Natural killer cell (primary cell): ENCODE measurements at regions of chr7 and their contacts with region 1.

Region 1: GRCh38 chr7:45136106-45137060 is 21.2 kb upstream of the RAMP3 start:
- DNase-seq: peak; percentile 58 to 93
- ATAC-seq: peak; percentile 86 to 98 (median 97)
- H3K4me3 ChIP-seq: no peak overlapping the region
- H3K4me3 Mint-ChIP-seq: no peak overlapping the region
- H3K27ac ChIP-seq: no peak overlapping the region
- H3K27ac Mint-ChIP-seq: peak overlapping the region in 1 of 2 donors; percentile 63
- H3K4me1 ChIP-seq: peaks cover 5% of the 10 kb centered on the region
- H3K4me1 Mint-ChIP-seq: peaks cover 12 to 23% of the 10 kb centered on the region in 2 donors
- H3K27me3 ChIP-seq: no peaks in the 10 kb centered on the region
- H3K27me3 Mint-ChIP-seq: peaks cover 0 to 8% of the 10 kb centered on the region in 2 donors
- CTCF ChIP-seq: peak; percentile 83

Region 2: DNA sequence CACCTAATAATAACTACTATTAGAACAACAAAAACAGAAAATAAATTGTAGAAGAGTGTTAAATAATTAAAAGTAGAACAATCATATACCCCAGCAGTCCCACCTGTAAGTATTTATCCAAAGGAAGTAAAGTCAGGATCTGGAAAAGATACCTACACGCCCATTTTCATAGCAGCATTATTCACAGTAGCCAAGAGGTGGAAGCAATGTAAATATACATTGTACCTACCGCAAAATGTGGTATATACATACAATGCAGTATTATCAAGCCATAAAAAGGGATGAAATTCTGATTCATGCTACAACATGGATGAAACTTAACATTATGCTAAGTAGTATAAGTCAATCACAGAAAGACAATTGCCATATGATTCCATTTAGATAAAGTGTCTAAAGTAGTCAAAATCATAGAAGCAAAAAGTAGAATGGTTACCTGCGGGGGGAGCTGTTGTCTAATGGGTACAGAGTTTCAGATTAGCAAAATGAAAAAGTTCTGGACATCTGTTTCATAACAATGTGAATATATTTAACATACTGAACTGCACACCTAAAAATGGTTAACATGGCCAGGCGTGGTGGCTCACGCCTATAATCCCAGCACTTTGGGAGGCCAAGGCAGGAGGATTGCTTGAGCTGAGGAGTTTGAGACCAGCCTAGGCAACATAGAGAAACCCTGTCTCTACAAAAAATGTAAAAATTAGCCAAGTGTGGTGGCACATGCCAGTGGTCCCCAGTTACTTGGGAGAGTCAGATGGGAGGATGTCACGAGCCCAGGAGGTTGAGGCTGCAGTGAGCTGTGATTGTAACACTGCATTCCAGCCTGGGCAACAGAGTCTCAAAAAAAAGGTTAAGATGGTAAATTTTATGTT is 548.3 kb before region 1 on chr7:
- intact Hi-C with region 1: loop called (anchors 5 kb)
- DNase-seq: peak; percentile 43 to 81
- ATAC-seq: peak; percentile 76 to 92 (median 79)
- H3K4me3 ChIP-seq: no peak overlapping the region
- H3K4me3 Mint-ChIP-seq: no peak overlapping the region
- H3K27ac ChIP-seq: no peak overlapping the region
- H3K27ac Mint-ChIP-seq: peak overlapping the region in 1 of 2 donors; percentile 12
- H3K4me1 ChIP-seq: peaks cover 5% of the 10 kb centered on the region
- H3K4me1 Mint-ChIP-seq: peaks cover 4 to 8% of the 10 kb centered on the region in 2 donors
- H3K27me3 ChIP-seq: no peaks in the 10 kb centered on the region
- H3K27me3 Mint-ChIP-seq: peaks cover 0 to 2% of the 10 kb centered on the region in 2 donors
- CTCF ChIP-seq: peak; percentile 74

Region 3: GRCh38 chr7:44858161-44858560 is 278.2 kb before region 1 on chr7:
- intact Hi-C with region 1: loop called (anchors 1 kb)
- DNase-seq: no peak
- ATAC-seq: no peak
- H3K4me3 ChIP-seq: no peak overlapping the region
- H3K4me3 Mint-ChIP-seq: no peak overlapping the region
- H3K27ac ChIP-seq: no peak overlapping the region
- H3K27ac Mint-ChIP-seq: no peak overlapping the region
- H3K4me1 ChIP-seq: peaks cover 7% of the 10 kb centered on the region
- H3K4me1 Mint-ChIP-seq: peaks cover 0 to 5% of the 10 kb centered on the region in 2 donors
- H3K27me3 ChIP-seq: no peaks in the 10 kb centered on the region
- H3K27me3 Mint-ChIP-seq: peaks cover 2 to 7% of the 10 kb centered on the region in 2 donors
- CTCF ChIP-seq: no peak

Region 4: GRCh38 chr7:44921607-44922359 is 214.6 kb before region 1 on chr7:
- intact Hi-C with region 1: loop called (anchors 5 kb)
- DNase-seq: peak; percentile 94
- ATAC-seq: peak; percentile 94 to 99 (median 99)
- H3K4me3 ChIP-seq: no peak overlapping the region
- H3K4me3 Mint-ChIP-seq: no peak overlapping the region
- H3K27ac ChIP-seq: no peak overlapping the region
- H3K27ac Mint-ChIP-seq: peak overlapping the region in 1 of 2 donors; percentile 74
- H3K4me1 ChIP-seq: peaks cover 5% of the 10 kb centered on the region
- H3K4me1 Mint-ChIP-seq: peaks cover 0 to 4% of the 10 kb centered on the region in 2 donors
- H3K27me3 ChIP-seq: no peaks in the 10 kb centered on the region
- H3K27me3 Mint-ChIP-seq: peaks cover 0 to 7% of the 10 kb centered on the region in 2 donors
- CTCF ChIP-seq: peak; percentile 87

Region 5: DNA sequence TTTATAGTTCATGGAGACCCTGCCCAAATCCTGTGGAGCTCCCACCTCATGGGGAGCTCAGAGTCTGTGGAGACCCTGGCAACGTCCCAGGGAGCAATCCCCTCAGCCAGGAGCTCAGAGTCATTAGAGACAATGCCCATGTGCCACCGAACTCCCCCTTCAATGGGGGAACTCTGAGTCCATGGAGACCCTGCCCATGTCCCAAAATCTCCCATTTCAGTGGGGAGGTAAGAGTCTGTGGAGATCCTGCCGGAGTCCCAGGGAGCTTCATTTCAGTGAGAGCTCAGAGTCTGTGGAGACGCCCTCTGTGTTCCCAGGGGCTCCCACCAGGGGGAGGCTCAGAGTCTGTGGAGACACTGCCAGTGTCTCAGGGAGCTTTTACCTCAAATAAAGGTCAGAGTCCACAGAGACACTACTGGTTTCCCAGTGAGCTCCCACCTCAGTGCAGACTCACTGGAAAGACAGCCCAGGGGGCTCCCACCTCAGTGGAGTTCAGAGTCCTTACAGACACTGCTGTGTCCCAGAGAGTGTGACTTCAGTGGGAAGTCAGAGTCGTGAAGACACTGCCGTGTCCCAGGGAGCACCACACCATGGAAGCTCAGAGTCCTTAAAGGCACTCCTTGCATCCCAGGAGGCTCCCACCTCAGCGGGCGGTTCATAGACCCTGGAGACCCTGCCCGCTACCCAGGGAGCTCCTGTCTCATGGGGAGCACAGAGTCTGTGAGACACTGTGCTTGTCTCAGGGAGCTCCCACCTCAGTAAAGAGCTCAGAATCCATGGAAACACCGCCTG is 162.6 kb before region 1 on chr7:
- intact Hi-C with region 1: loop called (anchors 1 kb)
- DNase-seq: peak; percentile 51 to 76
- ATAC-seq: peak; percentile 28 to 45 (median 38)
- H3K4me3 ChIP-seq: no peak overlapping the region
- H3K4me3 Mint-ChIP-seq: peak overlapping the region; percentile 13
- H3K27ac ChIP-seq: no peak overlapping the region
- H3K27ac Mint-ChIP-seq: peak overlapping the region; percentile 50 to 99
- H3K4me1 ChIP-seq: peaks cover 57% of the 10 kb centered on the region
- H3K4me1 Mint-ChIP-seq: peaks cover 34 to 53% of the 10 kb centered on the region in 2 donors
- H3K27me3 ChIP-seq: no peaks in the 10 kb centered on the region
- H3K27me3 Mint-ChIP-seq: no peaks in the 10 kb centered on the region
- CTCF ChIP-seq: peak; percentile 58

Region 6: GRCh38 chr7:45026984-45027773 is 109.2 kb before region 1 on chr7:
- intact Hi-C with region 1: loop called (anchors 5 kb)
- DNase-seq: peak; percentile 19 to 71
- ATAC-seq: peak; percentile 57 to 75 (median 69)
- H3K4me3 ChIP-seq: peak overlapping the region; percentile 88
- H3K4me3 Mint-ChIP-seq: peak overlapping the region; percentile 90
- H3K27ac ChIP-seq: peak overlapping the region; percentile 78
- H3K27ac Mint-ChIP-seq: peak overlapping the region; percentile 83 to 97
- H3K4me1 ChIP-seq: peaks cover 54% of the 10 kb centered on the region
- H3K4me1 Mint-ChIP-seq: peaks cover 64 to 69% of the 10 kb centered on the region in 2 donors
- H3K27me3 ChIP-seq: no peaks in the 10 kb centered on the region
- H3K27me3 Mint-ChIP-seq: no peaks in the 10 kb centered on the region
- CTCF ChIP-seq: no peak

Region 7: DNA sequence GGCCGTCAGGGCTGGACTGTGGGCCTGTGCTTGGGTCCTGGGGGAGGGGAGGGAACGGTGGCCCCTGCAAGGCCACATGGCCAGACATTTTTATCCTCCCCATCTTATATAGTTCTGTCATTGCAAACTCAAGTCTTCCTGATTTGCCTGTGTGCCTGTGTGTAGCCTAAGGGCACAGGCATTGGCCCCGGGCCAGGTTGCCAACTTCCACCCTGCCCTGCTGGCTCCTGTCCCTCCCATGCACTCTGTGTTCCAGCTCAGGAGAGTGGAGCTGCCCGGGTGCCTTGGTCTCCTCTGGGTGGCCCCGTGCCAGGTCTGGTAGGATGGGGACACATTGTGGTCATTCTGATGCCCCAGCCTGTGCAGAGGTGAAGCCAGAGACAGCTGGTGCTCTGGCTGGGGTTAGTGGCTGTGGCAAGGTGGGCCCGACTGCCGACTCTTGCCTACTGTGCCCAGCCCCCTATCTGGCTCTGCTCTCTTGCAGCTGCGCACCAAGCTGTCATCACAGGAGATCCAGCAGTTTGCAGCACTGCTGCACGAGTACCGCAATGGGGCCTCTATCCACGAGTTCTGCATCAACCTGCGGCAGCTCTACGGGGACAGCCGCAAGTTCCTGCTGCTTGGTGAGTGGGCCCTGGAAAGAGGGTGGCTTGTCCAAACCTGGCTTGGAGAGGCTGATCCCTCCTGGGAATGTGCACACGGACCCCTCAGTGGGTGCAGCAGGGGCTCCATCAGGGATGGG is 62.4 kb before region 1 on chr7:
- intact Hi-C with region 1: loop called (anchors 5 kb)
- DNase-seq: no peak
- ATAC-seq: no peak
- H3K4me3 ChIP-seq: no peak overlapping the region
- H3K4me3 Mint-ChIP-seq: peak overlapping the region; percentile 79
- H3K27ac ChIP-seq: peak overlapping the region; percentile 27
- H3K27ac Mint-ChIP-seq: peak overlapping the region; percentile 88 to 92
- H3K4me1 ChIP-seq: peaks cover 55% of the 10 kb centered on the region
- H3K4me1 Mint-ChIP-seq: peaks cover 58 to 70% of the 10 kb centered on the region in 2 donors
- H3K27me3 ChIP-seq: no peaks in the 10 kb centered on the region
- H3K27me3 Mint-ChIP-seq: no peaks in the 10 kb centered on the region
- CTCF ChIP-seq: no peak

Region 8: DNA sequence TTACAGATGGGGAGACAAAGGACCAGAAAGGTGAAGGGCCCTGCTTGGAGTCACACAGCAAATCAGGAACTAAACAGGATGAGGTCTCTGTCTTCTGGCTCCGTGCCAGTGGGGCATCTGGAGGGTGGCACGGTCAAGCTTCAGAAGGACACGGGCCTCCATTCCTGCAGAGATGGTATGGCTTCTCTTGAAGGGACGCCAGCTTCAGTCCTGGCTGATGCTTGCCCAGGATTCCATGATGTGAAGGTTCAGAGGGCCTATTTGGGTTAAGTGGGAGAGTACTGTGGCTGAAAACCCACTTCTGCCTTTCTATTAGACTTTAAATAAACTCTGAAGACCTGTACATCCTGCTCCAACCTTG is 27.3 kb after region 1 on chr7:
- intact Hi-C with region 1: no loop called
- DNase-seq: no peak
- ATAC-seq: no peak
- H3K4me3 ChIP-seq: no peak overlapping the region
- H3K4me3 Mint-ChIP-seq: no peak overlapping the region
- H3K27ac ChIP-seq: no peak overlapping the region
- H3K27ac Mint-ChIP-seq: no peak overlapping the region
- H3K4me1 ChIP-seq: peaks cover 4% of the 10 kb centered on the region
- H3K4me1 Mint-ChIP-seq: peaks cover 0 to 26% of the 10 kb centered on the region in 2 donors
- H3K27me3 ChIP-seq: peaks cover 1% of the 10 kb centered on the region
- H3K27me3 Mint-ChIP-seq: peaks cover 11 to 24% of the 10 kb centered on the region in 2 donors
- CTCF ChIP-seq: no peak

Region 9: GRCh38 chr7:45178241-45179225 is 42.1 kb after region 1 on chr7:
- intact Hi-C with region 1: no loop called
- DNase-seq: no peak
- ATAC-seq: no peak
- H3K4me3 ChIP-seq: no peak overlapping the region
- H3K4me3 Mint-ChIP-seq: no peak overlapping the region
- H3K27ac ChIP-seq: no peak overlapping the region
- H3K27ac Mint-ChIP-seq: no peak overlapping the region
- H3K4me1 ChIP-seq: no peaks in the 10 kb centered on the region
- H3K4me1 Mint-ChIP-seq: no peaks in the 10 kb centered on the region
- H3K27me3 ChIP-seq: no peaks in the 10 kb centered on the region
- H3K27me3 Mint-ChIP-seq: peaks cover 5 to 12% of the 10 kb centered on the region in 2 donors
- CTCF ChIP-seq: no peak